HepG2 (cell line): ENCODE measurements at regions of chr18 and their contacts with region 1.

Region 1: GRCh38 chr18:11387880-11388279 is 221.5 kb upstream of the SLC35G4 start:
- DNase-seq: peak; percentile 76
- ATAC-seq: peak; percentile 95
- H3K4me3 ChIP-seq: no peak overlapping the region
- H3K27ac ChIP-seq: no peak overlapping the region
- H3K4me1 ChIP-seq: no peaks in the 10 kb centered on the region
- H3K27me3 ChIP-seq: no peaks in the 10 kb centered on the region
- CTCF ChIP-seq: peak; percentile 72
- EP300 ChIP-seq: no peak
- POLR2A ChIP-seq: no peak
- RAD21 ChIP-seq: 0 out of 2 replicates have a peak, but pooled peaks have one; percentile 22

Region 2: DNA sequence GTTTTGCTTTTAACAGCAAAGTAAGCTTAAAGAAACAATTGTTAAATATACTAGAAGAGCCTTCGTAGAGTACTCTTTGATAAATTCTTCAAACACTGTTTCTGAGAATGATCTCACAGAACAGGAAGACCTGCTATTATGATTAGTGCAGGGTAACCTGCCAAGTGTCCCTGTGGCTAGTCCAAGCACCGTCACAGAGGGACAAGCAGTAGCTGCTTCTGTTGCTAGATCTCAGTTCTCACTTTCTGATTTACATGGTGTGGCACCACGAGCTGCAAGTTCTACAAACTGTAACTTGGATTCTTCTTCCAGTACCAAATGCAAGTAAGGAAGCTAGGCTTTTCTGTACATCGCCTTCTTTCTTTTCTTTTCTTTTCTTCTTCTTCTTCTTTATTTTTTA is 360.0 kb before region 1 on chr18:
- CTCF ChIA-PET with region 1: no interaction called
- POLR2A ChIA-PET with region 1: no interaction called
- in situ Hi-C with region 1: no loop called
- intact Hi-C with region 1: no loop called
- DNase-seq: no peak
- ATAC-seq: no peak
- H3K4me3 ChIP-seq: no peak overlapping the region
- H3K27ac ChIP-seq: no peak overlapping the region
- H3K4me1 ChIP-seq: peaks cover 5% of the 10 kb centered on the region; the same call in 1 of the 2 replicates
- H3K27me3 ChIP-seq: no peaks in the 10 kb centered on the region
- CTCF ChIP-seq: no peak
- EP300 ChIP-seq: no peak
- POLR2A ChIP-seq: no peak
- RAD21 ChIP-seq: no peak

Region 3: DNA sequence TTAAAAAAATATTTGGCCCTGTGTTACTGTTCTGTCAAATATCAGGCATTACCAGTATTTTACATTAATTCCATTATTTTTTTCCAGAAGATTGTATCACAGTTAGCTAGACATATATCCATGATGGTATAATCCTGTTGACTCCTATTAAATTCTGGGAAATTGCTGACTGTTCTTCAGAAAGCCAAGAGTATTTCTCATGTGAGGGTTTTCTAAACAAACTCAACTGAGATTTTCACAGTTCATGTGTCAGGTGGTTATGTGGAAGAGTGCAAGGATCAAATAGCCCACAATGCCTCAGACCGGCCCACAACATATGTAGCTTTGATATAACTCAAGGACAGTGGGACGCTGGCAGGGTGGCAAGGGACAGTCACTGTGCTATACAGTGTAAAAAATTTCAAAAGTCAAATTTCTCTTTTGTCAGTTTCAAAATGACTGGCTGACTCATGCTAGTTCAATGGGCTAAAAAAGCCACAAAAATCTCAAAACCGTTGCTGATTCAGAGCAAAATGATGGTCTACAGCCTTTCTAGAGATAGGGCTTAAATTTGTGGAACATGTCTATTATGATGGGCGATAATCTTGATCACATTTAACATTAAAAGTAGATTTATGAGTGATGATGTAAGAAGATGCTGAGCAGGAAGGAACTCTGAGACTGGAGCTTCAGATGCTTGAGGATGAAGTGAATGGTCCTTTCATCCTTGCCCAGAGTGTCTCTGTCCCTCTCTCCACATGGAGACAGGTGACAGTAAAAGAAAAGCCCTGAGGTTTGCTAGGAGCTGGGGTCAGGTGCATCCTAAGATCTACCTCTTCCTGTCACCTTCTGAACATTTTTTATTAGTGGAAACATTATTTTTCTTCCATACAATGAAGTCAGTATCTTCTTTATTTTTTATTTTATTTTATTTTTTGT is 62.7 kb before region 1 on chr18:
- CTCF ChIA-PET with region 1: no interaction called
- POLR2A ChIA-PET with region 1: no interaction called
- in situ Hi-C with region 1: loop called (anchors 10 kb)
- intact Hi-C with region 1: no loop called
- DNase-seq: peak; percentile 55
- ATAC-seq: peak; percentile 69
- H3K4me3 ChIP-seq: no peak overlapping the region
- H3K27ac ChIP-seq: no peak overlapping the region
- H3K4me1 ChIP-seq: peaks cover 24% of the 10 kb centered on the region
- H3K27me3 ChIP-seq: no peaks in the 10 kb centered on the region
- CTCF ChIP-seq: no peak
- EP300 ChIP-seq: no peak
- POLR2A ChIP-seq: no peak
- RAD21 ChIP-seq: no peak

Region 4: DNA sequence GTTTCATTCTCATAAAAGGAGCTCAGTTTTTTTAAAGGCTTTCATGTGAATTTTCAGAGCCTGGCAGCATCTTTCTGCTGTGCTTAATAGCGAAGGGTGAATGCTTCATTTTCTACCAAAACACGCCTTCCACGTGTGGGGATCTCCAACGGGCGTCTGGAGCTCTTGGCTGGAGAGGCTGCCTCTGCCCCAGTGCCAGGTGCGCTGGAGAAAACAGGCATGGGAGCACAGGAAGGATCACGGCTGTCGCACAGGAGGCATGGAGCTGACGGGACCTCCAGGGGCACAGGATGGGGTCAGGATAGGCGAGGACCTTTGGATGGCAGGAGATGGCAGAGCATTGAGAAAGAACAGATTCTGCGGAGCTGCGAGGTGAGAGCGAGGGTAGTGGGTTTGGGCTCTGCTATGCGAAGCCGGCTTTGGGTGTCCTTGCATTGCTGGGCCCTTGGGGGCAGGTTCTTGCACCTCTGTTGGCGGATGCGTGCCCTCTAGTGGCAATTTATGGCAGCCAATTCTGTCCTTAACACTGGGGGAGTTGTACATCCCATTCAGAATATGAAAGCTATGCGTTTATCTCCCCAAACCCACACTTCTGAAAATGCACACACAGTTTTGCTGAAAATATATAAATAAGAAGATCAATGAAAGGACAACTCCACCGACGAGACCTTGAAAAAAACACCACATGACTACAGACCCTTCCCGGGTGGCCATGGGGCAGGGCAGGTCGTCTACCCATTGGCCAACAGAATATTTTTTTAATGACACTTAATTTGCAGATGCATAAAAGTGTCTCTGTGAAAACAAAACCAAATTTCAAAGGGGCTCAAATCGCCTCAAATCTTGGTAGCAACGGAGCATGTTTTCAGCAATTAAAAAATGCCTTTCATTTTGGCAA is 131.2 kb after region 1 on chr18:
- CTCF ChIA-PET with region 1: no interaction called
- POLR2A ChIA-PET with region 1: no interaction called
- in situ Hi-C with region 1: no loop called
- intact Hi-C with region 1: loop called (anchors 5 kb)
- DNase-seq: peak; percentile 64
- ATAC-seq: peak; percentile 99
- H3K4me3 ChIP-seq: peak overlapping the region in 1 of 3 experiments; percentile 51; a peak in 1 of 6 replicates
- H3K27ac ChIP-seq: no peak overlapping the region
- H3K4me1 ChIP-seq: peaks cover 15% of the 10 kb centered on the region
- H3K27me3 ChIP-seq: no peaks in the 10 kb centered on the region
- CTCF ChIP-seq: peak; percentile 87
- EP300 ChIP-seq: no peak
- POLR2A ChIP-seq: no peak
- RAD21 ChIP-seq: peak; percentile 79